Activated B cell treated with CpG ODN at 0.5 μM for 24 hours (primary cell): ENCODE measurements at regions of chr13 and their contacts with region 1.

Region 1: GRCh38 chr13:45340926-45341750 is at the start of gene TPT1:
- DNase-seq: peak; percentile 99
- ATAC-seq: peak; percentile 89
- H3K4me3 Mint-ChIP-seq: peak within 1 kb of the TSS; percentile 99
- H3K27ac Mint-ChIP-seq: peak within 1 kb of the TSS; percentile 99
- H3K4me1 Mint-ChIP-seq: peaks cover 56% of the 10 kb centered on the region
- H3K27me3 Mint-ChIP-seq: no peaks in the 10 kb centered on the region
- CTCF ChIP-seq: no peak
- total RNA-seq, gene TPT1: 3,880 and 4,323 TPM in 2 replicates

Region 2: GRCh38 chr13:44013758-44014291 is 1327.3 kb before region 1 on chr13:
- CTCF ChIA-PET with region 1: no interaction called
- POLR2A ChIA-PET with region 1: no interaction called
- intact Hi-C with region 1: no loop called
- DNase-seq: no peak
- ATAC-seq: no peak
- H3K4me3 Mint-ChIP-seq: no peak overlapping the region
- H3K27ac Mint-ChIP-seq: no peak overlapping the region
- H3K4me1 Mint-ChIP-seq: peaks cover 9% of the 10 kb centered on the region
- H3K27me3 Mint-ChIP-seq: no peaks in the 10 kb centered on the region
- CTCF ChIP-seq: no peak

Region 3: DNA sequence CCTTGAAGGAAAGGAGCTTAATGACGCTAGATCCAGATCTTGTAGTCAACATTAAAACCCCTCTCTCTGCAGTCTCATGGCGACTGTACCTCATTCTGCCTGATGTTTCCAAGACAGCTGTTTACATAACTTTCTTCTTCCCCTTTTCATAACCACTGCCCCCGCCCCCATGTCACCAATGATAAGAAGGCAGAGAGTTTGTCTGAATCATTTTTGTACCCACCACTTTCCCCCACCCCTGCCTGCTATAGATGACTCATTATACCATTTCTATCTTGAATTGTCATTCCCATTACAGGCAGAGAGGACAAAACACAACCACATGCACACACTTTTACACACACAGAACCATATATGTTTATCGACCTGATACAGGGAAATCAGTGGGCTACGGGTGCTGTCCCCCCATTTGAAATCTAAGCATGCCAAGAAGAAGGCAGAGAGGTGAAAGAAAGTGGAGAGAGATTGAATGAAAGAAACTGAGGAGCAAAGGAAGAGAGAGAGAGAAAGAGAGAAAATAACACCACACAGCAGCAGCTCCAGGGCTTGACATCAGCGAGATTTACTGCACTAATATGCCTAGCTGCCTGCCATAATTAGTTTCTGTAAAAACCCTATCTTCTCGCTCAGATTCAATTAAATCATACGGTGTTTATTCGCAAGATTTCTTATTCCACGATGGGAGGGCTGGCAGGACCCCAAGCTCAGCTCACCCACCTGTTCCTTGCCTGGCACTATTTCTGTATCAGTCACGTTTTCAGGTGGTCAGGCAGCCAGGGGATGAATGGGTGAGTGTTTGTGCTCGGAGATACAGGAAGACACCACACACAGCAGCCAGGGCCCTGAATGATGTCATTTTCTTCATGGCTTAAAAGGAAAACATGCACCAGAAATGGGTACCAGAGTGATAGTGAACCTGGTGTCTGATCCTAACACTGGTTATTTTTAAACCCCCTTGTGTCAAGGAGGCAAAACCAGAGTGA is 1081.8 kb before region 1 on chr13:
- CTCF ChIA-PET with region 1: no interaction called
- POLR2A ChIA-PET with region 1: no interaction called
- intact Hi-C with region 1: loop called (anchors 5 kb)
- DNase-seq: peak; percentile 36
- ATAC-seq: peak; percentile 92
- H3K4me3 Mint-ChIP-seq: peak overlapping the region; percentile 74
- H3K27ac Mint-ChIP-seq: peak overlapping the region; percentile 80
- H3K4me1 Mint-ChIP-seq: peaks cover 19% of the 10 kb centered on the region
- H3K27me3 Mint-ChIP-seq: no peaks in the 10 kb centered on the region
- CTCF ChIP-seq: no peak

Region 4: GRCh38 chr13:45119991-45120864 is 220.9 kb before region 1 on chr13 and contains the start of gene GTF2F2:
- CTCF ChIA-PET with region 1: no interaction called
- POLR2A ChIA-PET with region 1: interaction called, 3 read pairs
- intact Hi-C with region 1: loop called (anchors 1 kb)
- DNase-seq: peak; percentile 90
- ATAC-seq: peak; percentile 82
- H3K4me3 Mint-ChIP-seq: no peak within 1 kb of the TSS
- H3K27ac Mint-ChIP-seq: no peak within 1 kb of the TSS
- H3K4me1 Mint-ChIP-seq: peaks cover 9% of the 10 kb centered on the region
- H3K27me3 Mint-ChIP-seq: no peaks in the 10 kb centered on the region
- CTCF ChIP-seq: no peak
- total RNA-seq, gene GTF2F2: 19.4 and 19.8 TPM in 2 replicates

Region 5: GRCh38 chr13:45393941-45394570 is 52.9 kb after region 1 on chr13:
- CTCF ChIA-PET with region 1: interaction called, 10 read pairs
- POLR2A ChIA-PET with region 1: interaction called, 5 read pairs
- intact Hi-C with region 1: loop called (anchors 1 kb)
- DNase-seq: no peak
- ATAC-seq: peak; percentile 74
- H3K4me3 Mint-ChIP-seq: no peak overlapping the region
- H3K27ac Mint-ChIP-seq: no peak overlapping the region
- H3K4me1 Mint-ChIP-seq: no peaks in the 10 kb centered on the region
- H3K27me3 Mint-ChIP-seq: no peaks in the 10 kb centered on the region
- CTCF ChIP-seq: no peak

Region 6: DNA sequence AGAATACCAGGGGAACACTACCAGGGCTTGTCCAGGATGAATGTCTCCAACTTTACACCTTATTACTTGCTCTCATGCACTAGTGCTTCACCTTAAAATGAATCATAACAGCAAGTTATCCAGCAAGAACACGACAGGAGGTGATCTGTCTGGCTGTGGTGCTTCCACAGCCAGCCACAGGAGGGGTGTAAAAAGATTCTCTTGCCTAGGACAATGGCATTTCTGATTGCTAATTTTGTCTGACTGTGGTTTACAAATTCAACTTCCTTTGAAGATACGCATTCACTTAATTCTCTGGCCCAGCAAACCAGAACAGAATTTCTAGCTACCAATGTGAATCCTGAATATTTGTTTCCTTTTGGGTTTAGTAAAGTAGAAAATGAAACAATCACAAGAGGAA is 100.5 kb after region 1 on chr13:
- CTCF ChIA-PET with region 1: no interaction called
- POLR2A ChIA-PET with region 1: no interaction called
- intact Hi-C with region 1: no loop called
- DNase-seq: no peak
- ATAC-seq: no peak
- H3K4me3 Mint-ChIP-seq: no peak overlapping the region
- H3K27ac Mint-ChIP-seq: no peak overlapping the region
- H3K4me1 Mint-ChIP-seq: peaks cover 9% of the 10 kb centered on the region
- H3K27me3 Mint-ChIP-seq: peaks cover 8% of the 10 kb centered on the region
- CTCF ChIP-seq: no peak

Region 7: DNA sequence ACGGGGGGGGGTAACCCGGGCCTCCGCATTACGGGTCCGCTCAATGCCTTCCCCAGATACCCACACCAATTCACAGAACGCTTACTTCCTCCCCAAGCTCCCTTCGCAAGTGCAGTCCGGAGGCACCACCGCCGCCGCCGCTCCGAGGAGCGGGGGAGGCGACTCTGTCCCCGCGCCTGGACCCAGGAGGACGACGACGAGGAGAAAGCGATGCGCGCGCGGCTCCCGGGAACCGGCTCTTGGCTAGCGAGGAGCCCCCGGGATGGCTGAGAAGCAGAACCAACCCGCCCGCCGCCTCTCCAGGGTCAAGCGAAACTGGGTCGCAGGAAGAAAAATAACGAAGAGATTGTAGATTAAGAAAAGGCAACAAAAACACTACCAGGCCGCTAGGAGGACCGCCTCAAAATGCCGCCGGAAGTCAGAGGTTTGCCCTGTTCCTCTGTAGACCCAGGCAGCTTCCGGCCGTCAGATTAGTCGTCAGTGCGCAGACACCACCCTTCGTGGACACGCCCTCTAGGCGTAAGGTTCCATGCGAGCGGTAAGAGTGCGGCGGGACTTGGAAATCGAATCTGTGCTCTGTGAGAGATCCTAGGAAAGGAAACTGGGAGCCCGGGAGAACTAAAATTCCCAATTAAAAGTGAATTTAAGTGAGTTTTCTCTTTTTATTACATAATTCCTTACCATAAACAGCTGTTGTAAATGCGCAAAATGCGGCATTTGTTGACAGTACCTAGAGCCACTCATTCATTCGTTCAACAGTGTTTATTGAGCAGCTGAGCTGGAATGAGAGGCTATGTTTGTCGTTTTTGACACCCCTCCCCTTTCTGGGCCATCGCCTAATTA is 711.4 kb after region 1 on chr13 and contains the start of gene ZC3H13:
- CTCF ChIA-PET with region 1: no interaction called
- POLR2A ChIA-PET with region 1: no interaction called
- intact Hi-C with region 1: loop called (anchors 1 kb)
- DNase-seq: peak; percentile 76
- ATAC-seq: peak; percentile 99
- H3K4me3 Mint-ChIP-seq: peak within 1 kb of the TSS; percentile 95
- H3K27ac Mint-ChIP-seq: peak within 1 kb of the TSS; percentile 96
- H3K4me1 Mint-ChIP-seq: peaks cover 39% of the 10 kb centered on the region
- H3K27me3 Mint-ChIP-seq: peaks cover 1% of the 10 kb centered on the region
- CTCF ChIP-seq: no peak
- total RNA-seq, gene ZC3H13: 48.1 and 48.7 TPM in 2 replicates

Region 8: DNA sequence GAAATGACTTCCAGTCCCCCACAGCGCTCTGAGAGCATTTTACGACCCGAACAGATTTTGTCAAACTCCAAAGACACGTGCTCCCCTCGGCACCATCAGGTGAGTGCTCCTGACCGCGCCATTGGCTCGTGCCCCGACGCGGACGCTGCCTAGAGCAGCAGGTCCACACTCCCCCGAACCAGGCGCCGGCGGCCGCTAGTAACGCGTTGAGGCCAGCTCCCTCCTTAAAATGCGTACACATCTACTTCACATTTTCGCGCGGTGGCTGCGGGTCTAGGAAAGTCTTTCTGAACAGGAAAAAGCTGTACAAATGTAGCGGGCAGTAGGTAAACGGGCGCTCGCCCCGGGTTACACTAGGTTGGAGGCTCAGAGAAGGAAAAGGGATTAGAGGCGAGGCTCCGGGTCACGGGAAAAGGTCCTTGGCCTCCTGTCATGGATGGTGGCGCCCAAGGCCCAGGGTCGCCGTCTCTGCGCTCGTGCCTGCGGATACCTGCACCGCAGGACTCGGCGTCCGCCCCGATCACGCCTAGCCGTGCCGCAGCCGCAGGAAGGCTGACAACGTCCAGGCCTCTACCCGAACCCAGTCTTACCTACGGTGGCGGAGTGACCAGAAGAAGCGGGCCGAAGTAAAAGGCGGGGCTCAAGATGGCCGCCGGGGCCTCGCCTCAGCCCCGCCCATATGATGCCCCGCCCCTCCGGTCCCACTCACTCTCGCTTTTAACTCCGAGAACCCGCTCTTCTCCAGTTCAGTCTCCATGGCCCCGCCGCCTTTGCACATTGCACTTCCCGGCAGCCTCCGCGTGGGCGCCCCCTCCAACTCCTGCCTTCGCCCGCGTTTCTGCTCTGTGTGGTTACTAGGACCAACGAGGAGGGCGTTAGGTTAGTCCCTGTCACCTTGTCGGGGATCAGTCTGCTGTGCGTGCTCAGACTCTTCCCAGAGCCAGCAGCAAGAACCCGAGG is 1455.7 kb after region 1 on chr13 and contains the start of gene ESD:
- CTCF ChIA-PET with region 1: no interaction called
- POLR2A ChIA-PET with region 1: no interaction called
- intact Hi-C with region 1: loop called (anchors 2 kb)
- DNase-seq: peak; percentile 86
- ATAC-seq: peak; percentile 95
- H3K4me3 Mint-ChIP-seq: peak within 1 kb of the TSS; percentile 97
- H3K27ac Mint-ChIP-seq: peak within 1 kb of the TSS; percentile 96
- H3K4me1 Mint-ChIP-seq: peaks cover 38% of the 10 kb centered on the region
- H3K27me3 Mint-ChIP-seq: no peaks in the 10 kb centered on the region
- CTCF ChIP-seq: no peak
- total RNA-seq, gene ESD: 73.5 and 74.2 TPM in 2 replicates

Region 9: GRCh38 chr13:47233734-47234133 is 1892.6 kb after region 1 on chr13:
- CTCF ChIA-PET with region 1: no interaction called
- POLR2A ChIA-PET with region 1: no interaction called
- intact Hi-C with region 1: no loop called
- DNase-seq: no peak
- ATAC-seq: no peak
- H3K4me3 Mint-ChIP-seq: no peak overlapping the region
- H3K27ac Mint-ChIP-seq: no peak overlapping the region
- H3K4me1 Mint-ChIP-seq: no peaks in the 10 kb centered on the region
- H3K27me3 Mint-ChIP-seq: no peaks in the 10 kb centered on the region
- CTCF ChIP-seq: no peak